Ascending aorta (tissue), 2 donors: ENCODE measurements at regions of chr15 and their contacts with region 1.

Region 1: DNA sequence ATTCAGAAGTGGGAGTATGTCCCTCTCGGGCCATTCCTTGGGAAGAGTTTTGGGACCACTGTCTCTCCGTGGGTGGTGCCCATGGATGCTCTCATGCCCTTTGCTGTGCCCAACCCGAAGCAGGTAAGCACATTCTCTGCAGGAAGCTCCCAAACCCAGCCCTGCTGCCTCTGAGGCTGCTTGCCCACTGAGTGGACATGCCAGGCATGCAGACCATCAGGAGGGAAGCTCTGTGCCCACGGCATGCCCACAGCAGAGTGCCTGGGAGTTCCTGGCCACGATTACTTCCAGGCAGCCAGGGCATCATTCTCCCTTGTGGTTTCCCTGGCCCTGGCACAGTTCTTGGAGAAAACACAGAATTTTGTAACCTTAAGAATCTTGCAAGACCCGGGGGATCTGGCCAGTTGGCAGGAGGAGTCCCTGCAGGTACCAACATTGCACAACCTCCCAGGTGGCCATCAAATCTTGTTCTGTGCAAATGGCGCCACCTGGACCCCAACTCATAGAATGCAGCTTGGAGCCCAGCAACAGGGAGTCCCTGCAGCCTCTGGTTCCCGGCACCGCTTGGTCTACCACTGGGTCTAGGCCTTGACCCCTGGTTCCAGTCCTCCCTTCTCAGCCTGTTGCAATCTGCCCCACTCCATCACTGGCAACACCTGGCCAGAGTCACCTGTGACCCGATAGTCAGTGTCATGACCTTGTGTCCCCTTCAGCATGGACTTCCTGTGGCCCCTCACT is 20.4 kb downstream of the FAH start:
- DNase-seq: peak; percentile 27 to 86
- H3K4me3 ChIP-seq: no peak overlapping the region
- H3K27ac ChIP-seq: peak overlapping the region; percentile 91 to 93
- H3K4me1 ChIP-seq: peaks cover 25 to 30% of the 10 kb centered on the region in 2 donors
- H3K27me3 ChIP-seq: no peaks in the 10 kb centered on the region
- CTCF ChIP-seq: peak; percentile 53 to 68 (median 66)

Region 2: DNA sequence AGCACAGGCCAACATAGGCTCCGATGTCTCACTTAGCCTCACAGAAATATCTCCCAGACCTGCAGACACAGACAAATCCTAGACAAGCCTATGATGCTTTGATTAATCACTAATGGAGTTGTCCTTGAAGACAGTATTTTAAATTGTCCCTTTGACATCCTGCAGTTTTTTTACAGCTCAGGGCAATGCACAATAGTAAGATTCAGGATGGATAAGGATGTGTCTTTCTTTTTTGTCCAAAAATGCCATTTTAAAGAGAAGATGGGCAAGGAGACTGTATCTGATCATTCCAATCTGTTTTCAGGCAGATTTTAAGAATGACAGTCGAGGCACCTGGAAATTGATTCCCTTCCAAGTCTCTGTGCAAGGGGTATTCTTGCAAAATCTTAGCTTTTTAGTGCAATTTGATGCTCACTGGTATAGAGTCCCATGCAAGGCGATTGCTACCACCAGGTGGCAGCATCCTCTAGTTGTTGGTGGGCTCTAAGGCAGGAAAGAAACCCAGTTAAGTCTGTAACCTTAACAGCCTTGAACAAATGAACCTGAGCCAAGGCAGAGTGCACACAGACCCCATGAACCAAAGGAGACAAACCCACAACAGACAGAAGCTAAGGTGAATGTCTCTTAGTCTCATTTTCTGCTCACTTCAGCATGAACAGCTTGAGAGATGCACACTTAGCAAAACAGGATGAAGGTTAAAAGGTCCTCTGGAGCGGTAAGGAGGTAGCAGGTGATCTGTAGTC is 792.3 kb before region 1 on chr15:
- intact Hi-C with region 1: loop called (anchors 2 kb)
- DNase-seq: peak; percentile 19 to 87
- H3K4me3 ChIP-seq: no peak overlapping the region
- H3K27ac ChIP-seq: no peak overlapping the region
- H3K4me1 ChIP-seq: no peaks in the 10 kb centered on the region
- H3K27me3 ChIP-seq: no peaks in the 10 kb centered on the region
- CTCF ChIP-seq: peak; percentile 52 to 91 (median 80)

Region 3: GRCh38 chr15:79923515-79924395 is 249.4 kb before region 1 on chr15:
- intact Hi-C with region 1: loop called (anchors 5 kb)
- DNase-seq: peak; percentile 82 to 96
- H3K4me3 ChIP-seq: peak overlapping the region; percentile 79 to 86
- H3K27ac ChIP-seq: peak overlapping the region; percentile 95 to 96
- H3K4me1 ChIP-seq: peaks cover 5 to 6% of the 10 kb centered on the region in 2 donors
- H3K27me3 ChIP-seq: no peaks in the 10 kb centered on the region
- CTCF ChIP-seq: no peak

Region 4: GRCh38 chr15:80152180-80152845 is 20.9 kb before region 1 on chr15:
- intact Hi-C with region 1: loop called (anchors 1 kb)
- DNase-seq: peak; percentile 97 to 98
- H3K4me3 ChIP-seq: peak overlapping the region; percentile 71 to 84
- H3K27ac ChIP-seq: peak overlapping the region; percentile 83 to 85
- H3K4me1 ChIP-seq: peaks cover 4 to 15% of the 10 kb centered on the region in 2 donors
- H3K27me3 ChIP-seq: no peaks in the 10 kb centered on the region
- CTCF ChIP-seq: no peak

Region 5: DNA sequence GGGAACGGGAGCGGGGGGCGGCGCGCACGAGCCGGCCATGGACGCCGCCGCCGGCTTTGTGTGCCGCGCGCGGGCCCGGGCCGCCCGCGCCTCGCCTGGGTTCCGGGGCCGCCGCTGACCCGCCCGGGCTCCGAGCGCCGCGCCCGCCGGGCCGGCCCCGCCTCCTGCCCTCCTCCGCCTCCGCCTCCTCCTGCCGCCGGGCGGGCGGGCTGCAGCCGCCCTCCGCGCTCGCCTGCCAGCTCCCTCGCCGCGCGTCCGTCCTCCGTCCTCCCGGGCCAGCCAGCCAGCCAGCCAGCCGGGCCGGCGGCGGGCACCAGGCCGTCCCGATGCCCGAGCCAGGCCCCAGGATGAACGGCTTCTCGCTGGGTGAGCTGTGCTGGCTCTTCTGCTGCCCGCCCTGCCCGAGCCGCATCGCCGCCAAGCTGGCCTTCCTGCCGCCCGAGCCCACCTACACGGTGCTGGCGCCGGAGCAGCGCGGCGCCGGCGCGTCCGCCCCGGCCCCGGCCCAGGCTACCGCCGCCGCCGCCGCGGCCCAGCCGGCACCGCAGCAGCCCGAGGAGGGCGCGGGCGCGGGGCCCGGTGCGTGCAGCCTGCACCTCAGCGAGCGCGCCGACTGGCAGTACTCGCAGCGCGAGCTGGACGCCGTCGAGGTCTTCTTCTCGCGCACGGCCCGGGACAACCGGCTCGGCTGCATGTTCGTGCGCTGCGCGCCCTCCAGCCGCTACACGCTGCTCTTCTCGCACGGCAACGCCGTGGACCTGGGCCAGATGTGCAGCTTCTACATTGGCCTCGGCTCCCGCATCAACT is 522.1 kb after region 1 on chr15 and contains the start of gene ABHD17C:
- intact Hi-C with region 1: loop called (anchors 10 kb)
- DNase-seq: peak in 1 of 2 donors; percentile 69
- H3K4me3 ChIP-seq: peak within 1 kb of the TSS; percentile 80 to 85
- H3K27ac ChIP-seq: peak within 1 kb of the TSS; percentile 81 to 82
- H3K4me1 ChIP-seq: peaks cover 0 to 10% of the 10 kb centered on the region in 2 donors
- H3K27me3 ChIP-seq: no peaks in the 10 kb centered on the region
- CTCF ChIP-seq: no peak
- total RNA-seq, gene ABHD17C: 0.96 TPM